Activated CD4-positive, alpha-beta memory T cell treated with anti-CD3 and anti-CD28 coated beads, Interleukin-2, amount 10 ng/mL, durations not matched to agents 7 days and 5 days (primary cell): ENCODE measurements at regions of chr17 and their contacts with region 1.

Region 1: GRCh38 chr17:75147878-75148546 is 6.3 kb downstream of the JPT1 start:
- DNase-seq: no peak
- H3K4me3 Mint-ChIP-seq: no peak overlapping the region
- H3K27ac Mint-ChIP-seq: peak overlapping the region; percentile 21
- H3K4me1 Mint-ChIP-seq: peaks cover 39% of the 10 kb centered on the region
- H3K27me3 Mint-ChIP-seq: no peaks in the 10 kb centered on the region

Region 2: GRCh38 chr17:75131280-75132017 is 16.6 kb before region 1 on chr17 and contains the start of gene NT5C:
- CTCF ChIA-PET with region 1: interaction called, 20 read pairs
- POLR2A ChIA-PET with region 1: interaction called, 8 read pairs
- DNase-seq: peak; percentile 75
- H3K4me3 Mint-ChIP-seq: peak within 1 kb of the TSS; percentile 86
- H3K27ac Mint-ChIP-seq: peak within 1 kb of the TSS; percentile 85
- H3K4me1 Mint-ChIP-seq: peaks cover 41% of the 10 kb centered on the region
- H3K27me3 Mint-ChIP-seq: no peaks in the 10 kb centered on the region
- total RNA-seq, gene NT5C: 68.2 to 69.4 TPM